Heart right ventricle (tissue), 16 donors: ENCODE measurements at regions of chr12 and their contacts with region 1.

Region 1: DNA sequence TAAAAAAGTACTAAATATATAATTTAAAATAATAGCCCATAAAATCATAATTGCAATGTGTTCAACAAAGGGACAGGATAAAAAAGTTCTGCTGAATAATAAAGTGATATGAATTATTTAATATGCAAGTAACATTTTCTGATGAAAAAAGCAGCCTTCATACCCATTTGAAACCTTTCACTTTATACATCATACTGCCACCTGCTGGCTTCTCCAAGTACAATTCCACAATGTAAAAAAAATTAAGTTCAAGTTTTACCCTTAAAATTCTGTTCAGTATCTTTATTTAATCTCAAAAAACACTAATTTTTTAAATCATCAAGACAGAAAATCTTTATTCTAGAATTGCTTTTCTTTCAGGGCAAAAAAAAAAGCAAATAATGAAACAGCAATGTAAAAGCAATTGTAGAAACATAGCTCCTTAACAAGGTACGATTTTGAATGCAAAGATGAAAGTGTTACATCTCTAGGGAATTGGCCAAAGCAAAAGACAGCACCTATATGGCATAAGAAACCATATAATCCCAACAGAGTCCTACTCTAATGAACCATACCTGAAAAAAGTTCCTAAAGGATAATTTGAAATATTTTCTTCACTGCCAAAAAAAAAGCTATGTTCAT is 15.0 kb downstream of the MDM1 start:
- DNase-seq: peak in 1 of 2 donors; percentile 42
- ATAC-seq: no peak
- H3K4me3 ChIP-seq: no peak overlapping the region
- H3K27ac ChIP-seq: no peak overlapping the region
- H3K4me1 ChIP-seq: peaks cover 0 to 16% (median 0%) of the 10 kb centered on the region in 9 donors
- H3K27me3 ChIP-seq: no peaks in the 10 kb centered on the region
- CTCF ChIP-seq: peak; percentile 42 to 85 (median 76)

Region 2: DNA sequence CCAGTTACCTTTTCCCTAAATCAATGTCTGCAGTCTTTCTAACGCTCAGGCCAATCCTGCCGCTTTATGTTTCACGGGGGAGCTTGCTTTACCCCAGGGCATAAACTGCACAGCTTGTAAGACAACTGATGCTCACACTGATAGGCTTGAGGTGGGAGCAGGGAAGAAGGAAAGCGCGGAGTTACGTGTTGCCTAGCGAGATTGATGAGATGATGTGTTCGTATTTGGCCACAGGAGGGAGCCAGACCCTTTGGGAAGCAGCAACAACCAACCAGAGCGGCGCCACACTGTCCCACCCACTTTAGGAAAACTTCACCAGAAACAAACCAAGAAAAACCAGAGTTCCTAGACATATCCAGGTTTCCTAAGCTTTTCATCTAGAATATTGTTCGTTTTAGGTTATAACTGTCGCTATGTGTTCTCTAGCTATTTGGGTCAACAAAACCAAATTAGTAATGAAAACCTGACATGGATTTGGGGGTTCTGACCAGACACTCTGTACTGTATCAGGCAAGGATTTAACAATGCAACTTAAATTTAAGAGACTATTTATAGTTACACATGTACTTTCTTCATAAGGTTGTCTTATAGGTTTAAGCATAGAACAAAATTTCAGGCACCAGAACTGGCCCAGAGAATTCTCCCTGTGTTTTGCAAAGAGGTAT is 93.9 kb before region 1 on chr12:
- intact Hi-C with region 1: loop called (anchors 1 to 5 kb)
- DNase-seq: peak; percentile 55 to 81
- ATAC-seq: peak; percentile 91 to 99 (median 98)
- H3K4me3 ChIP-seq: peak overlapping the region in 1 of 10 donors; percentile 13
- H3K27ac ChIP-seq: peak overlapping the region in 1 of 10 donors; percentile 15
- H3K4me1 ChIP-seq: peaks cover 0 to 18% (median 3%) of the 10 kb centered on the region in 9 donors
- H3K27me3 ChIP-seq: peaks cover 0 to 11% (median 0%) of the 10 kb centered on the region in 7 donors
- CTCF ChIP-seq: peak; percentile 73 to 90 (median 85)

Region 3: DNA sequence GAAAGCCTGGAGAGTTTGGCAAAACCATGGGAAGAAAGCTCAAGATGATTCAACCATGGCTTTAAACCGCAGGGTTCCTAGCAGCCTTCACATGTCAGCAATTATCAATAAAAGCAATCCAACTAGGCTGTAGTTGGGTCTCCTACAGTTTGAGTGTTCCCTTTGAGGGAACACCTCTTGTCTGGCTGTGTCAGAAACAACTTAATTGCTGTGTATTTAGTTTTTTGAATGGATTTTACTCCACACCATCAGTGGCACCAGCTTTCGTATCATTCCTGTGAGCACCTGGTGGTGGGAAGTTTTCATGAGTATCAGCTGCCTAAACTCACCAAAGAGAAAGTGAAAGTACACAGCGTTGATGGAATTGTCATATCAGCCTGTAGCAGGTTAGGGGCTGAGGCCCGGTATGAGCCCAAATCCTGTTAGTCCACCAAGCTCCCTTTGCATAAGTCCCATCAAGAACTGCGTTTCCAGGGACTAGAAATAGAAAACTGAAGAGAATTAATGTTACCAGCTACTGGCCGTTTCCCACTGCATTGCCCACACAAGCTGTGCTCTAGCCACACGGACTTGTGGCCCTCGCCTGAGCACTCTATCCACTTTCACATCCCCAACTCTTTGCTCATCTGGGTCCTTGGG is 80.6 kb before region 1 on chr12:
- intact Hi-C with region 1: loop called in 2 of 10 experiments (anchors 5 kb)
- DNase-seq: peak in 1 of 2 donors; percentile 10
- ATAC-seq: peak in 7 of 8 donors; percentile 51 to 80 (median 69)
- H3K4me3 ChIP-seq: peak overlapping the region in 9 of 10 donors; percentile 7 to 48 (median 38)
- H3K27ac ChIP-seq: peak overlapping the region in 5 of 10 donors; percentile 6 to 70 (median 38)
- H3K4me1 ChIP-seq: peaks cover 0 to 34% (median 11%) of the 10 kb centered on the region in 9 donors
- H3K27me3 ChIP-seq: no peaks in the 10 kb centered on the region
- CTCF ChIP-seq: peak in 1 of 9 donors; percentile 8